Activated CD4-positive, alpha-beta memory T cell treated with anti-CD3 and anti-CD28 coated beads for 36 hours (primary cell): ENCODE measurements at regions of chr10 and their contacts with region 1.

Region 1: DNA sequence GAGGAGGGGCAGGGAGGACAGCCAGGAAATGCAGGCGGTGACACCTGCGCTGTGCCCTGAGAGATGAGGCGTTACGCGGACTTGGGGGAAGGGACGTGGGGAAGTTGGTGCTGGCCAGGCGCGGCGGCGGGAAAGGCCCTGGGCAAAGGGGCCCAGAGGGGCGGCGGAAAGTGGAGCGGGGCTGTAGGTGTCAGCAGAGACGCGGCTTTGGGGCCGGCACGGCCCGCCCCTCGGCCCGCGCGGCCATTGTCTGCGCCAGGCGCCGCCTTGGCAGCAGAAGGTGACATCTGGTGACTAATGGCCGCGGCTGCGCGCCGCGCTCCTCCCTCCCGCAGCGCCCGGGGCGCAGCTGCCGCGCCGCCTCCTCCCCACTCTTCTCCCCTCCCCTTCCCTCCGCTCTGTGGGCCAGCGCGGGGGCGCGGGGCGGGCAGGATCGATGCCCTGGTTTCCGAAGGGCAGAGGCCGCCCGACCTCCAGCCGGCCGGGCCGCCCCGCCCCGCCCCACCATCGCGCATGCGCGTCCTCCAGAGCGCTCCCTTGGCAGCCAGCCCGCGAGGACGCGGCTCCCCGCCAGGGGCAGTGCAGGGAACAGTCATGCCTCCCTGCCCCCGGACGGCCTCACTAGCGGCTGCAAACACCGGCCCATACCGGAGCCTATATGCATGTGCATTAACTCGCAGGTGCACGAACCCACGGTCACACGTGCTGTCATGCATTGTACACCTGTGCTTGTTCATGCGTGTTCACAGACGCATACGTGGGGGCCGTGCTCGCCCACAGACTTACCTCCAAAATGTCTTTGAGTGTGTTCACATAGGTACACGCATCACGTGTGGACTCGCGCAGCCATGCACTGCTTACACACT is 269.6 kb downstream of the RPS24 start:
- DNase-seq: peak; percentile 98
- H3K4me3 Mint-ChIP-seq: peak overlapping the region; percentile 84
- H3K27ac Mint-ChIP-seq: peak overlapping the region; percentile 89
- H3K4me1 Mint-ChIP-seq: peaks cover 11% of the 10 kb centered on the region
- H3K27me3 Mint-ChIP-seq: no peaks in the 10 kb centered on the region

Region 2: DNA sequence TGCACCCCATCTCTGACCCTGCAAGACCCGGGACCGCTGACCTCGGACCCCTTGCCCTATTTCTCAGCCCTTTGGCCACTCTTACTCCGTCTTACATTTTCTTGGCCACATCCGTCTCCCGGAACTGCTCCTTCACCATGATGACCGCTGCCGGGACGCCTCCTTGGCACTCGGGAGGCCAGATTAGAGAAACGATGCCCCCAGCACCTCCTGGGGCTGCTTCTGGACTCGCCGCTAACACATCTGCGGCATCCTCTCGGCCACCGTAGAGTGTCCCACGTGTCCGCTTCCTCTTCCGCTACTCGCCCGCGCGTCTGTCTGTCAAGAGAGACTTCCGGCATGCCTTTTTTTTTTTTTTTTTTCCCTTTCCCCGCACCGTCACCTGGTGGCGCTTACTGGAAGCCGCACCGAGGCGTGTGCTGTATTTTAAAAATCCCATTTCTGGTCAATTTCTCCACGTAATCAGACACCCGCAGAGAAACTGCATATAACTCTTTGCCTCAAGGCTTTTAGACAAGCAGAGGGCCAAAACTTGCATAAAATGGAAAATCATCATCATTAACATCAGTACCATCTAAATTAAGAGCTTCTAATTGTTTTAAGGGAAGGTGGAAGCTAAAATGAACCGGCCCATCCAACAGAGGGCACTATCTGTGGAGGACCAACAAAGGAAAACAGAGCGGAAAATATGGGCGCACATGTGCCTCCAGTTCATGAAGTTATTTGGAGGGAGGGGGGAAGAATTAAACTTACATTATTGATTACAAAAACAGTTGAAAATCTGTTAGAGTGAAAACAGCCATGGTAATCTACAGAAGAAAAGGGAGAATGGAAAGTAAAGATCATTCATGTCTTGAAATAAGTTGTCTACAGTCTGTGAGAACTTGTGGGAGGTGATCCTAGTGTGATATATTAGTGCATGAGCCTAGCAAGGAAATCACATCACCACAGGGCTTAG is 273.7 kb before region 1 on chr10 and contains the start of gene POLR3A:
- CTCF ChIA-PET with region 1: no interaction called
- POLR2A ChIA-PET with region 1: no interaction called
- intact Hi-C with region 1: loop called (anchors 1 kb)
- DNase-seq: peak; percentile 94
- H3K4me3 Mint-ChIP-seq: peak within 1 kb of the TSS; percentile 99
- H3K27ac Mint-ChIP-seq: peak within 1 kb of the TSS; percentile 93
- H3K4me1 Mint-ChIP-seq: peaks cover 33% of the 10 kb centered on the region
- H3K27me3 Mint-ChIP-seq: no peaks in the 10 kb centered on the region
- total RNA-seq, gene POLR3A: 16.6 to 17.0 TPM

Region 3: GRCh38 chr10:78657163-78657861 is 354.1 kb after region 1 on chr10:
- CTCF ChIA-PET with region 1: interaction called, 6 read pairs
- POLR2A ChIA-PET with region 1: no interaction called
- intact Hi-C with region 1: loop called (anchors 10 kb)
- DNase-seq: peak; percentile 81
- H3K4me3 Mint-ChIP-seq: no peak overlapping the region
- H3K27ac Mint-ChIP-seq: no peak overlapping the region
- H3K4me1 Mint-ChIP-seq: no peaks in the 10 kb centered on the region
- H3K27me3 Mint-ChIP-seq: peaks cover 8% of the 10 kb centered on the region

Region 4: GRCh38 chr10:79242620-79243152 is 939.5 kb after region 1 on chr10:
- CTCF ChIA-PET with region 1: no interaction called
- POLR2A ChIA-PET with region 1: no interaction called
- intact Hi-C with region 1: loop called (anchors 2 kb)
- DNase-seq: peak; percentile 79
- H3K4me3 Mint-ChIP-seq: peak overlapping the region; percentile 76
- H3K27ac Mint-ChIP-seq: peak overlapping the region; percentile 91
- H3K4me1 Mint-ChIP-seq: peaks cover 55% of the 10 kb centered on the region
- H3K27me3 Mint-ChIP-seq: no peaks in the 10 kb centered on the region

Region 5: GRCh38 chr10:79445141-79445976 is 1142.1 kb after region 1 on chr10 and contains the start of gene ZCCHC24:
- CTCF ChIA-PET with region 1: no interaction called
- POLR2A ChIA-PET with region 1: no interaction called
- intact Hi-C with region 1: loop called (anchors 5 kb)
- DNase-seq: peak; percentile 95
- H3K4me3 Mint-ChIP-seq: peak within 1 kb of the TSS; percentile 70
- H3K27ac Mint-ChIP-seq: peak within 1 kb of the TSS; percentile 26
- H3K4me1 Mint-ChIP-seq: peaks cover 18% of the 10 kb centered on the region
- H3K27me3 Mint-ChIP-seq: peaks cover 6% of the 10 kb centered on the region
- total RNA-seq, gene ZCCHC24: 0.77 to 1.00 TPM